ENCODE measurements at regions of chr1 and their contacts with region 1.

Region 1: DNA sequence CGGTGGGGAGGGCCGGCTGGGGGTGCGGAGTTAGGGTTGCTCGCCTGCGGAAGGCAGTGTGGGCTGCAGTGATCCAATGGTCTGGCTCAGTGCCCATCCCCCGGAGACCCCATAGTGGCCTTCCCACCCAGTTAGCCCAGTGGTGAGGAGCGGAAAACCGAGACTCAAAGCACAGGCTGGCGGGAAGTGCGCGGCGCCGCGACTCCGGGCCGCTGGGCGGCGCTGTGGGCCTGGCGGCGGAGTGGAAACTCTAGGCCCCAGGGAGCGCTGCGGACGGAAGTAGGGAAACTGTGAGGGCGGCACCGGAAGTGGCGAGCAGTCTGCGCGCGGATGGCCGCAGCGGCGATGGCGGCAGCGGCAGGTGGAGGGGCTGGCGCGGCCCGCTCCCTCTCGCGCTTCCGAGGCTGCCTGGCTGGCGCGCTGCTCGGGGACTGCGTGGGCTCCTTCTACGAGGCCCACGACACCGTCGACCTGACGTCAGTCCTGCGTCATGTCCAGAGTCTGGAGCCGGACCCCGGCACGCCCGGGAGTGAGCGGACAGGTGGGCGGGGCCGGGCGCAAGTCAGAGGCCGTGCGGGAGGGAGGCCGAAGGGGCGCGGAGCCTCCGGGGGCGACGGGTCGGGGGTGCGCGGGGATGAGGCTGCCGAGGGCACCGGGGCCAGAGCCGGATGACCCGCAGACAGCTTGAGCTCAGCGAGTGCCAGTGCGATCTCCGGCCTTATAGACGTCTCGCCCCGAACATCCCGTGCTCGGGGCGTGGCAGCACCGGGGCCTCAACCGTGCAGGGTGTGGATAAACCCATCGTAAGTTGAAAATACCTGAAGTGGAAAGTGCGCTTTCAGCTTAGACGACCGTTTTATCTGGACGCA is at the start of gene ADPRS:
- DNase-seq: peak; percentile 75
- ATAC-seq: peak; percentile 82
- H3K4me3 ChIP-seq: peak within 1 kb of the TSS; percentile 96 to 98
- H3K27ac ChIP-seq: peak within 1 kb of the TSS; percentile 76
- H3K4me1 ChIP-seq: peaks cover 0 to 15% of the 10 kb centered on the region in 2 experiments; a peak in 2 of 4 replicates
- H3K27me3 ChIP-seq: no peaks in the 10 kb centered on the region
- CTCF ChIP-seq: peak; percentile 81 to 98 (median 89)
- POLR2A ChIP-seq: peak; percentile 76
- RAD21 ChIP-seq: peak; percentile 53; the same call in 1 of the 2 replicates
- total RNA-seq, gene ADPRS: 28.2 TPM

Region 2: GRCh38 chr1:35857830-35858229 is 231.0 kb before region 1 on chr1:
- CTCF ChIA-PET with region 1: no interaction called
- POLR2A ChIA-PET with region 1: no interaction called
- RAD21 ChIA-PET with region 1: no interaction called
- intact Hi-C with region 1: loop called (anchors 10 kb)
- DNase-seq: peak; percentile 10
- ATAC-seq: peak; percentile 74
- H3K4me3 ChIP-seq: no peak overlapping the region
- H3K27ac ChIP-seq: no peak overlapping the region
- H3K4me1 ChIP-seq: no peaks in the 10 kb centered on the region
- H3K27me3 ChIP-seq: no peaks in the 10 kb centered on the region
- CTCF ChIP-seq: peak; percentile 15 to 37 (median 29); a peak in 3 of 6 replicates
- POLR2A ChIP-seq: no peak
- RAD21 ChIP-seq: peak; percentile 50

Region 3: DNA sequence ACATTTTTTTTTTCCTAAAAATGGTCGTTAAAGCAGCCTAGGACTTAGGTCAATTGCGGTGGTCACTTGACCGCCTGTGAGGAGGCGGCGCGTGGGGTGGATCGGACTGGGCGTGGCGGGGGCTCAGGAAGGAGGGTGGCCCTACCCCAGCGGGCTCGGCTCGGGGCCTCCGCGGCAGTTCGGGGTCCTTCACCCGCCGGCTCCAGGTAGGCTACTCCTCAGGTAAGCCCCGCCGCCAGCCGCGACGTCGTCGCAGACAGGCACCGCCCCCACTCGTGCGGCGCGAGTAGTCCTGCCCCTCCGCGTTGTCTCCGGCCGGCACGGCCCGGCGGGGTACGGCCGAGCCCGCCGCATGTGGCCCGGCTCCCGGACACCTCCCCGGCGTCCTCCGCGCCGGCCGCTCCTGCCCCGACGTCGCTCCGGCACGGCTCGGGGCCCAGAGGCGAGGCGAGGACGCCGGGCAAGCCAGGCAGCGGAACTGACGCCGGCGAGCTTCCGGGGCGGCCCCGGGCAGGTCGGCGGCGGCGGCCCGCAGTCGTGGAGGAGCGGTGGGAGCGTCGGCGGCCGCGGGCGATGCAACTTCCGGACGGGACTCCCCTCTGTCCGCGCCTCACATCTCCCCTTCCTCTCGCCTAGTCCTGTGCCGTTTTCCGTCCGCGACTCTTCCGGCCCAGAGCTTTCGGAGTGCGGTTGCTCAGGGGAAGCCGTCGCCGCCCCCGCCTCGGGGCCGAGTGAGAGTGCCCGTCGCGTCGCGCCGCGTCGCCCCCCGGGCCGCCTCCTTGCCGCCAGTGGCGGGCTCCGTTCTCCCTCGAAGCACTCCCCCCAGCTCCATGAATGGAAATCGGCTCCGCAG is 158.0 kb before region 1 on chr1 and contains the start of gene AGO3:
- CTCF ChIA-PET with region 1: no interaction called
- POLR2A ChIA-PET with region 1: no interaction called
- RAD21 ChIA-PET with region 1: no interaction called
- intact Hi-C with region 1: loop called (anchors 2 kb)
- DNase-seq: peak; percentile 67
- ATAC-seq: peak; percentile 87
- H3K4me3 ChIP-seq: peak within 1 kb of the TSS; percentile 81 to 100
- H3K27ac ChIP-seq: peak within 1 kb of the TSS; percentile 99
- H3K4me1 ChIP-seq: peaks cover 14% of the 10 kb centered on the region in 2 experiments
- H3K27me3 ChIP-seq: no peaks in the 10 kb centered on the region
- CTCF ChIP-seq: no peak
- POLR2A ChIP-seq: peak; percentile 84
- RAD21 ChIP-seq: no peak
- total RNA-seq, gene AGO3: 26.9 TPM